ENCODE measurements at regions of chr11 and their contacts with region 1.

Region 1: DNA sequence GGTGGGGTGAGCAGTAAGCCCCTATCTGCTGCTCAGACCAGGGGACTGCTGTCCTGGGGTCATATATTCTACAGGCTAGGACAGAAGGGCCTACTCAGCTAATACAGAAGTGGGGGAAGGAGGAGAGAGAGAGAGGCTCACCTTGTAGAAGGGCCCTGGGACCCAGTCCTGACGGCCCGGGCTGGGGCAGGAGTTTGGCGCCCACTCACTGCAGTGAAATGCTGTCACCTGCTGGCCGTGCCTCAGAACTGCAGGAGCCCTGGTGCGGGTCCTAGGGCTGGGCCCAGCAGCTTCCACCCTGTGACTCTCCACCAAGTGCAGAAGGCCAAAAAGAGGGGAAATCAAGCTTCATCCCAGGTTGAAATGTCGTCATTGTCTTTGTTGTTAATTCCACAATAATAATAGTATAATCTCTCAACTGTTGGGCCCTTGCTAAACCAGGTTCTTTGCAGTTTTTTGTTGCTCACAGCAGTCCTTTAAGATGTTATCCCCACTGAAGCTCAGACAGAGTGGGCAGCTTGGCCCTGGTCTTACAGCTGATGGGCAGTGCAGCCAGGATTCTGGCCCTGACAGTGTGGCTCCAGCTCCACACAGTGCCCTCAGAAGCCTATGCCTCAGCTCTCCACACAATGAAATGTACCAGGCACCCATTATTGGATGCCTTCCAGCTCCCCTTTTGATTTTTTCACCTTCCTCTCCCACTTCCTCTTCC is 29.6 kb downstream of the TRIM29 start:
- DNase-seq: peak; percentile 46 to 85 (median 77)
- H3K4me3 ChIP-seq: no peak overlapping the region
- H3K27ac ChIP-seq: no peak overlapping the region
- H3K4me1 ChIP-seq: no peaks in the 10 kb centered on the region
- H3K27me3 ChIP-seq: peaks cover 7% of the 10 kb centered on the region
- CTCF ChIP-seq: peak; percentile 96 to 99 (median 98)
- POLR2A ChIP-seq: no peak

Region 2: GRCh38 chr11:119739021-119739703 is 369.1 kb before region 1 on chr11:
- intact Hi-C with region 1: loop called in 1 of 2 experiments (anchors 5 kb)
- DNase-seq: no peak
- H3K4me3 ChIP-seq: no peak overlapping the region
- H3K27ac ChIP-seq: no peak overlapping the region
- H3K4me1 ChIP-seq: no peaks in the 10 kb centered on the region
- H3K27me3 ChIP-seq: peaks cover 25% of the 10 kb centered on the region
- CTCF ChIP-seq: no peak
- POLR2A ChIP-seq: no peak

Measured in adrenal gland (tissue), 19 donors.